BJ (cell line): ENCODE measurements at regions of chr7 and their contacts with region 1.

Region 1: GRCh38 chr7:137592232-137592896 is 248.8 kb upstream of the PTN start:
- DNase-seq: peak; percentile 16
- H3K4me3 ChIP-seq: no peak overlapping the region
- H3K27me3 ChIP-seq: no peaks in the 10 kb centered on the region
- CTCF ChIP-seq: peak; percentile 87

Region 2: DNA sequence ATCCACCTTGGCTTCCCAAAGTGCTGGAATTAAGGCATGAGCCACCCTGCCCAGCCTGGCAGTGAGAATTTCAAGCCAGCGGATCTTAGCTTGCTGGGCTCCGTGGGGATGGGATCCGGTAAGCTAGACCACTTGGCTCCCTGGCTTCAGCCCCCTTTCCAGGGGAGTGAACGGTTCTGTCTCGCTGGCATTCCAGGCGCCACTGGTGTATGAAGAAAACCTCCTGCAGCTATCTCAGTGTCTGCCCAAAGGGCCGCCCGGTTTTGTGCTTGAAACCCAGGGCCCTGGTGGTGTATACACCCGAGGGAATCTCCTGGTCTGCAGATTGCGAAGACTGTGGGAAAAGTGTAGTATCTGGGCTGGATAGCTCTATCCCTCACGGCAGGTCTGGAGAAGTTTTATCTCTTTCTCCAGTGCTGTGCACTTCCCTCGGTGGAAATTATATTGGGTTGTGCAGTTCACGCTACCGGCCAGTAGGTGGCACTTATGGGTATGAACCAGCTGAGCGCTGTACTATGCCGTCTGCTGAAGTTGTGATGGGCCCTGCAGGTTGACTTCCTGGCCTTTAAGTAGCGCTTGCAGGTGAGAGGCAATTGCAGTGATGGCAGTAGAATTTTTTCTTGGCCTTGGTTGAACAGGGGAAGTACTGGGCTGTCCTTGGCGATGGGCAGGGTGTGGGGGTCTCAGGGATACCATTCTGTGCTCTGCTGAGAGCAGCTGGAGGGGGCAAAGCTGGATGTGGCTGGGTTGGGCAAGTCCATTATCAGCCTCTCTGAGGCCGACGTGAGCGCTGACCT is 1477.2 kb before region 1 on chr7:
- CTCF ChIA-PET with region 1: interaction called, 15 read pairs
- POLR2A ChIA-PET with region 1: no interaction called
- DNase-seq: no peak
- H3K4me3 ChIP-seq: no peak overlapping the region
- H3K27me3 ChIP-seq: no peaks in the 10 kb centered on the region
- CTCF ChIP-seq: peak; percentile 81

Region 3: DNA sequence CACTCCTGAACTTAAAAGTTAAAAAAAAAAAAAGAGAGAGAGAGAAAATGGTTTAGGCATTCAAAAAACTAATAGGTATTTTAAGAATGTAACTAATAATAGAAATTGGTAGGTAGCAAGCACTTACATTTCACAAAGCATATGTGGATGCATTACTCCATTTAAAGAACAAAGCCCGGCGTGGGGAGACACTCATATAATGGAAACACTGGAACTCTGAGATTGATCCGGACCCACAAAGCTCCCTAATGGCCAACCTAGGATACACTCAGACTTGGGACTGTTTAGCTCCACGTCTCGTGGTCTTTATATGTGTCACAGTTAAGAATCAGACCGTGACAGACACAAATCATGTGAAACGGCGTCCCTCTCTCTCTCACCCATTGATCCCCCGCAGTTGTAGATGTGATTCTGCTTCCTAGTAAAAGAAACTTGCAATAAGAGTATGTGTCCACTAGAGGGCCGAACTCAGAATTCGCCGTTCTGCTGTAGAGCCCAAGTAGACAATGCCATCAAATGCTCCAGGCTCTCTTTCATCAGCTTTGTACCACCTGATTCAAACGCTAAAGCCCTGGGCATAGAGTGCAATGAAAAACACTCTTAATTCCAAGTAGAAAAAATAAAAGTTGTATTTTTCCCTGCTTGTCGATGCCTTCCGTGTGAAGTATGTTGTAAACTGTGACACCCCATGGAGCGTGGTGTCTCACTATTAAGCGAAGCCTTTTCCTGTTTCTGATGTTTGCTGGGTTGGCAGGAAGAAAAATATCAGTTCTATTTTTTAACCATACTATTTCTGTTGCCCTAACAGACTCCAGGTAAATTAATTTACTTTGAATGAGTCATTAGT is 1186.2 kb before region 1 on chr7:
- CTCF ChIA-PET with region 1: interaction called, 11 read pairs
- POLR2A ChIA-PET with region 1: no interaction called
- DNase-seq: peak; percentile 1
- H3K4me3 ChIP-seq: no peak overlapping the region
- H3K27me3 ChIP-seq: no peaks in the 10 kb centered on the region
- CTCF ChIP-seq: peak; percentile 80

Region 4: GRCh38 chr7:137169282-137169698 is 423.1 kb before region 1 on chr7:
- CTCF ChIA-PET with region 1: interaction called, 61 read pairs
- POLR2A ChIA-PET with region 1: no interaction called
- DNase-seq: peak; percentile 47
- H3K4me3 ChIP-seq: no peak overlapping the region
- H3K27me3 ChIP-seq: no peaks in the 10 kb centered on the region
- CTCF ChIP-seq: peak; percentile 78

Region 5: DNA sequence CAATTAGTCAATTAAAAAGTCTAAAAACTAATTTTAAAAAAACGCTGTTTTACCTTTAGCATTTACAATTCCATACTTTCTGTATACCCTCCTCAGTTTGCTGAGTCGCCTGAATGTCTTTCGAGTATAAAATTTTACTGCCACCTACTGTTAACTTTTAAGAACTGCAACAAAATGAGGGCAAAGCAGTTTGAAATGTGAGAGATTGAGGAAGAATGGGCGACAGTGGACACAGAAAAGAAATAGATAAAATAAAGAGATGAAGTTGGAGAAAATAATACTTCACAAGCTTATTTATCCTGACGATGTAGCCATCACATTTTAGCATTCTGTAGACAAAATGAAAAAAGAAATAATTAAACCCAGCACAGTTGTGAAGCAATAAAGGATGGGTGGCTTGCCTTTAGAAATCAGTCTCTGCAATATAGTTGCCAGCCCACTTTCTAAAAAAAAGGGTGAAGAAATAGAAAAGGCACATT is 138.1 kb before region 1 on chr7:
- CTCF ChIA-PET with region 1: interaction called, 24 read pairs
- POLR2A ChIA-PET with region 1: no interaction called
- DNase-seq: no peak
- H3K4me3 ChIP-seq: no peak overlapping the region
- H3K27me3 ChIP-seq: no peaks in the 10 kb centered on the region
- CTCF ChIP-seq: peak; percentile 63

Region 6: DNA sequence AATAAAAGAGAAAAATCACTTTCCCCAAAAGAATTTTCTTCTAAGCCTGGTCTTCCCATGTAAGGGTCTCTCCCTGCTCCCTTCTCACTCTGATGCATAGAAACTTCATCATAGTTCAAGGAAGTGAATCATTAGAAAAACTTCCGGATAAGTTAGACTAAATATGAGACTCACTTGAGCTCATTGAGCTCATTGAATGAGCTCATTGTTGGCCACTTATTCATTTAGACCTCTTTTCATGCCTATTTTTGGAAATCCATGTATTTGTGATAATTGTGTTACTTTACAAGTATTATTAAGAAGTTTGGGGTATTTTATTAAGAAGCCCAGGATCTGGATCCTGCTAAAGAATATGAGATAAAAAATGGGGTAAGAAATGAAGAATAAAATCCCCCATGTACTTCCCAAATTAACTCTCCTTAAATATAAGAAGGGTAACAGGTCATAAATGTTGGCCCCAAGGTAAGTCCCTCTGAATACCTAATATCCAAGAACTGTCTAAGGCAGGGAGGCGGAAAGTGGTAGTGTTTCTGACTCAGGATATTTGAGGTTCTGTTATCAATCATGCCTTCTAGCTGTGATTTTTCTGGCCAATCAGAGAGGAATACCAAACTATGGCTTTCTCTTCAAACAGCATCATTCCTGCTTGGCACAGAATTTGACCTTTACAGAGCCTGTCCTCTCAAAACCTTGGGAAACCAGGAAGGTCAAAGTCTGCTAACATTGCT is 12.3 kb before region 1 on chr7:
- CTCF ChIA-PET with region 1: interaction called, 21 read pairs
- POLR2A ChIA-PET with region 1: no interaction called
- DNase-seq: peak; percentile 28
- H3K4me3 ChIP-seq: no peak overlapping the region
- H3K27me3 ChIP-seq: no peaks in the 10 kb centered on the region
- CTCF ChIP-seq: no peak

Region 7: DNA sequence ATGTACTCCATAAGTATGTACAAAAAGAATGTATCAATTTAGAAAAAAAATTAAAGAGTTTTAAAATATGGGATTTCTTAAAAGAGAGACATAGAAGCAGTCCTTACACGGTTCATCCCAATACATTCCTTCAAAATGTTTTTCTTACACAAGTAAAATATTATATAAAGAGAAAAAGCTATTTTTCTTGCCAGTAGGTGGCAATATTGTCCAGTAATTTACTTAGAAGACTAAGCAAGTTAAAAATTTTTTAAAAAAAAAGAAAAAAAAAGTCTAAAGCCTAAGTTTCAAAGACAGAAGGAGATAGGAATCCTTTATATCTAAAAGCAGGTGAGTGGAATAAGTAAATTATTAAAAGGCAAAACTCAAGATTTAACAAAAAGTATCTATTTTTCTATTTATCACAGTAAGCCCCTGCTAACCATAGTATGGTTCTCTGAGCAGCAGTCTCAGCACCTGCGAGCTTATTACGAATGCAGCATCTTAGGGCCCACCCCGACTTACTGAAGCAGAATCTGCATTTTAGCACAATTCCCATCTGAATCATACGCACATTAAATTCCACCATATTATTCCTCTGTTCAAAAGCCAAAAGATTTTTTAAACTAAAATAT is 13.8 kb after region 1 on chr7:
- CTCF ChIA-PET with region 1: interaction called, 13 read pairs
- POLR2A ChIA-PET with region 1: no interaction called
- DNase-seq: peak; percentile 31
- H3K4me3 ChIP-seq: no peak overlapping the region
- H3K27me3 ChIP-seq: no peaks in the 10 kb centered on the region
- CTCF ChIP-seq: peak; percentile 22; the same call in 1 of the 2 replicates